Brain microvascular endothelial cell (primary cell): ENCODE measurements at regions of chr1 and their contacts with region 1.

Region 1: DNA sequence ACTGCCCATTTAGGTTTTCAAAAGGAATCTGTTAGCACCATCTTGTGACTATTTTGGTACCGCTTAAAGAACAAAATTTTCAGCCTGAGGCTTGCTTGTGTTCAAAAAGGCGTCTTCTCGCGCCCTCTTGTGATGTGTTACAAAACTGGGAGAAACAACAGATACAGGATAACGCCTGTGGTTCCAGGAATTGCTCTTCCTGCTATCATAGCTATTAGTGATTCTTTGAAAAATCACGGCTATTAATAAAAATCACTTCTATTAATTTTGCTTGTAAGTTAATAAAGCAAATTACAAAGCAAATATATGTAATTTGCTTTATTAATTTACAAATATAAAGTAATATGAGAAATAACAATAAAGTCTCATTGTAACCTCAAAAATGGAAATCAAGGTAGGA is 82.2 kb upstream of the ABCD3 start:
- DNase-seq: peak; percentile 88
- H3K4me3 ChIP-seq: no peak overlapping the region
- H3K27ac ChIP-seq: no peak overlapping the region
- H3K27me3 ChIP-seq: no peaks in the 10 kb centered on the region
- CTCF ChIP-seq: peak; percentile 89

Region 2: DNA sequence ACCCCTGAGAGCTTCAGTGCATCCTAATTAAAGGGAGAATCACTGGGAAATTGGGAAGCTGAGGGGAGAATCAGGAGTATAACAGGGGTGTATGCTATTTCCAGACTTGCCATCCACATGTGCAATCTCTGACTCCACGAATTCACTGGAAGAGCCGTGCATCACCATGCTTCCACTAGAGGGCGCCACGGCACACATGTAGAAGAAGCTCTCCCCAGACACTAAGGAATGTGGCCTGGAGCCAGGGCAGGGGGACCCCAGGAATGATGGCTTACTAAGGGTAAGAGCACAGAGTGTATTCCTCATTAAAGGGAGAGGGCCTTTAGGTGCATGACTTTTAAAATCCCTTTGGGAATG is 296.5 kb before region 1 on chr1:
- in situ Hi-C with region 1: loop called (anchors 10 kb)
- DNase-seq: peak; percentile 74
- H3K4me3 ChIP-seq: no peak overlapping the region
- H3K27ac ChIP-seq: no peak overlapping the region
- H3K27me3 ChIP-seq: no peaks in the 10 kb centered on the region
- CTCF ChIP-seq: peak; percentile 97

Region 3: GRCh38 chr1:94237291-94238226 is 98.4 kb before region 1 on chr1 and contains the start of gene ARHGAP29:
- in situ Hi-C with region 1: loop called (anchors 25 kb)
- DNase-seq: peak; percentile 74
- H3K4me3 ChIP-seq: peak within 1 kb of the TSS; percentile 89
- H3K27ac ChIP-seq: peak within 1 kb of the TSS; percentile 78
- H3K27me3 ChIP-seq: no peaks in the 10 kb centered on the region
- CTCF ChIP-seq: peak; percentile 20